OCI-LY7 (cell line): ENCODE measurements at regions of chr12 and their contacts with region 1.

Region 1: DNA sequence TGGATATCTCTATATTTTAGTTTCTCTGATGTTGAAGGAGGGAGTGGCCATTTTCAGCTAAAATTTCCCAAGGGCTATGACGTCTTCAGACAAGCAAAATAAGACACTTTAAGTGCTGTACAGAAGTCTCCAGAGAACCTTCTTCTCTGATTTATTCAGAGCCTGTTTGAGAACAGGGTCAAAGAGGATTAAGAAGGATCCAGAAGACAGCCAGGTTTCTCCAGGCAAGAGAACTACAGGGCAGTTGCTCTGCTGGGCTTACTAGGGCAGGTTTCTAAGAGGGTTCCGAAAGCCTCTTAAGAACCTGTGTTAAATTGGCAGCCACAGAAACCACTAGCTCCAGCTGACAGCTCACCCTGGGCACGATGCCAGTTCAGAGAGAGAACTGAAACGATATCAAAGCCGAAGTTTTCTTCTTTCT is 1.2 kb downstream of the MGP start:
- DNase-seq: peak; percentile 85
- H3K4me3 ChIP-seq: peak overlapping the region; percentile 40
- H3K27ac ChIP-seq: peak overlapping the region; percentile 41
- H3K4me1 ChIP-seq: peaks cover 54% of the 10 kb centered on the region
- CTCF ChIP-seq: no peak

Region 2: GRCh38 chr12:14601692-14602478 is 282.6 kb before region 1 on chr12:
- CTCF ChIA-PET with region 1: no interaction called
- POLR2A ChIA-PET with region 1: no interaction called
- intact Hi-C with region 1: no loop called
- DNase-seq: no peak
- H3K4me3 ChIP-seq: no peak overlapping the region
- H3K27ac ChIP-seq: no peak overlapping the region
- H3K4me1 ChIP-seq: no peaks in the 10 kb centered on the region
- CTCF ChIP-seq: no peak

Region 3: GRCh38 chr12:14782756-14783155 is 101.7 kb before region 1 on chr12:
- CTCF ChIA-PET with region 1: no interaction called
- POLR2A ChIA-PET with region 1: no interaction called
- intact Hi-C with region 1: no loop called
- DNase-seq: no peak
- H3K4me3 ChIP-seq: no peak overlapping the region
- H3K27ac ChIP-seq: no peak overlapping the region
- H3K4me1 ChIP-seq: peaks cover 5% of the 10 kb centered on the region
- CTCF ChIP-seq: no peak

Region 4: GRCh38 chr12:14930299-14930698 is 45.8 kb after region 1 on chr12:
- CTCF ChIA-PET with region 1: no interaction called
- POLR2A ChIA-PET with region 1: interaction called, 3 read pairs
- intact Hi-C with region 1: loop called (anchors 5 kb)
- DNase-seq: no peak
- H3K4me3 ChIP-seq: no peak overlapping the region
- H3K27ac ChIP-seq: no peak overlapping the region
- H3K4me1 ChIP-seq: peaks cover 5% of the 10 kb centered on the region
- CTCF ChIP-seq: no peak

Region 5: GRCh38 chr12:15044471-15044870 is 160.0 kb after region 1 on chr12:
- CTCF ChIA-PET with region 1: no interaction called
- POLR2A ChIA-PET with region 1: interaction called, 10 read pairs
- intact Hi-C with region 1: no loop called
- DNase-seq: no peak
- H3K4me3 ChIP-seq: no peak overlapping the region
- H3K27ac ChIP-seq: no peak overlapping the region
- H3K4me1 ChIP-seq: no peaks in the 10 kb centered on the region
- CTCF ChIP-seq: no peak